ENCODE measurements at regions of chr12 and their contacts with region 1.

Region 1: GRCh38 chr12:69388371-69388770 is 28.8 kb downstream of the YEATS4 start:
- ATAC-seq: peak in 3 of 8 experiments; percentile 62 to 69 (median 64)
- H3K4me3 ChIP-seq: no peak overlapping the region
- H3K27ac ChIP-seq: no peak overlapping the region
- H3K4me1 ChIP-seq: no peaks in the 10 kb centered on the region

Region 2: GRCh38 chr12:69585189-69586062 is 197.1 kb after region 1 on chr12 and contains the start of gene CCT2:
- in situ Hi-C with region 1: loop called in 1 of 9 experiments (anchors 25 kb)
- ATAC-seq: peak; percentile 92 to 96 (median 94)
- H3K4me3 ChIP-seq: peak within 1 kb of the TSS; percentile 66 to 97 (median 86)
- H3K27ac ChIP-seq: peak within 1 kb of the TSS; percentile 89 to 91
- H3K4me1 ChIP-seq: peaks cover 6 to 7% of the 10 kb centered on the region in 2 donors
- total RNA-seq, gene CCT2: 179 to 338 (median 260) TPM

Measured in motor neuron (in vitro differentiated cells).